ENCODE measurements at regions of chr20 and their contacts with region 1.

Region 1: DNA sequence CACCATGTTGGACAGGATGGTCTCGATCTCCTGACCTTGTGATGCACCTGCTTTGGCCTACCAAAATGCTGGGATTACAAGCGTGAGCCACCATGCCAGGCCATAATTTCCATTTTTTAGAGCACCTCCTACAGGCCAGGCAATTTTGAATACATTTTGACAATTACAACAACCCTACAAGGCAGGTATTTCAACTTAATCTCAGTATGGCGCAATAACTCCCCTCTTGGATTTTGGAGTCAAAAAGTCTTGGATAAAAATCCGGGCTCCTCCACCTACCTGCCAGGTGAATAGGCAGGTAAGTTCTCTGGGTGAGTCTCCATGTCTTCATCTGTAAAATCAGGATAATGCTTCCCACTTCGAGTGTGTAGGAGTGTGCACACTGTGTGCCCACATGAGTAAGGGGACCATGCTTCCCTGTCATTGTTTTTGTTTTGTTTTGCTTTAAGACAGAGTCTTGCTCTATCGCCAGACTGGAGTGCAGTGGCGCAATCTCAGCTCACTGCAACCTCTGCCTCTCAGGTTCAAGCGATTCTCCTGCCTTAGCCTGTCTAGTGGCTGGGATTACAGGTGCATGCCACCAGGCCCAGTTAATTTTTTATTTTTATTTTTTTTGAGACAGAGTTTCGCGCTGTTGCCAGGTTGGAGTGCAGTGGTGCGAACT is 39.3 kb upstream of the TFAP2C start:
- DNase-seq: no peak
- ATAC-seq: no peak
- H3K4me3 ChIP-seq: no peak overlapping the region
- H3K27ac ChIP-seq: no peak overlapping the region
- H3K4me1 ChIP-seq: peaks cover 35% of the 10 kb centered on the region
- H3K27me3 ChIP-seq: no peaks in the 10 kb centered on the region
- CTCF ChIP-seq: 0 out of 2 replicates have a peak, but pooled peaks have one; percentile 19

Region 2: GRCh38 chr20:55360895-55361294 is 1228.9 kb before region 1 on chr20:
- CTCF ChIA-PET with region 1: no interaction called
- POLR2A ChIA-PET with region 1: no interaction called
- intact Hi-C with region 1: no loop called
- DNase-seq: no peak
- ATAC-seq: no peak
- H3K4me3 ChIP-seq: no peak overlapping the region
- H3K27ac ChIP-seq: no peak overlapping the region
- H3K4me1 ChIP-seq: no peaks in the 10 kb centered on the region
- H3K27me3 ChIP-seq: no peaks in the 10 kb centered on the region
- CTCF ChIP-seq: no peak

Region 3: GRCh38 chr20:56380375-56380774 is 209.4 kb before region 1 on chr20:
- CTCF ChIA-PET with region 1: no interaction called
- POLR2A ChIA-PET with region 1: no interaction called
- intact Hi-C with region 1: no loop called
- DNase-seq: no peak
- ATAC-seq: no peak
- H3K4me3 ChIP-seq: no peak overlapping the region
- H3K27ac ChIP-seq: no peak overlapping the region
- H3K4me1 ChIP-seq: no peaks in the 10 kb centered on the region
- H3K27me3 ChIP-seq: no peaks in the 10 kb centered on the region
- CTCF ChIP-seq: no peak

Region 4: DNA sequence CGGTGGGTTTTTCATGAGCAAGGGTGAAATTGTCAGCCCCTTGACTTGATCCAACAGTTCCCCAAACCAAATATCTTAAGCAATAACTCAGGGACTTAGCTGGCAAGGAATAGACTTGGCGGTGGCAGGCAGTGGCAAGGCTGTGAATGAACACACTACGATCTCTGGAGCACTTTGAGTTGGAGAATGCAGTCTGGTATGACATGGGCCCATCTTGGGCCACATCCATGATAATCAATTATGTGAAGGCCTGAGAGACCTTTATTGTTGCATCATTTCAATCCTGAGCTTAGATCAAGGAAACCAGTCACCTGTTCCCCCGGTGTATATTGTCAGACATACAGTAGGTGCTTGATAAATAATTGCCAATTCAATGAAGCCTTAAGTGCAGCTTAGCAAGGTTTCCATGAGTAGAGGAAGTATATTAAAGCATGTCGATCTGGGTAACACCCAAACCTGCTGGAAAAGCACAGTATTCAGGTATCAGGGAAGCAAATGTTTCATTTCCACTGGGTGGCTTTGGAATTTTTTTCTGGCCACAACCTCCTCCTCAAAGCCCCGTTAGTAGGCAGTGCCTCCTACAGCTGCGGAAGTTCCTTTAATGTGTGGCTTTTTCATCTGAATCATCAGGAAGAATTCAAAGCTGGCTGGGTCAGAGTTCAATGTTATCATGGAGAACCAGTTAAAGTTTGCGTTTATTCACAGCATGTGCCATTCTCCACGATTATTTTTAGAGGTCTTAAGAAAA is 167.5 kb before region 1 on chr20:
- CTCF ChIA-PET with region 1: no interaction called
- POLR2A ChIA-PET with region 1: no interaction called
- intact Hi-C with region 1: no loop called
- DNase-seq: peak; percentile 92
- ATAC-seq: peak; percentile 87
- H3K4me3 ChIP-seq: no peak overlapping the region
- H3K27ac ChIP-seq: peak overlapping the region; percentile 6; the same call in 1 of the 2 replicates
- H3K4me1 ChIP-seq: peaks cover 36% of the 10 kb centered on the region
- H3K27me3 ChIP-seq: no peaks in the 10 kb centered on the region
- CTCF ChIP-seq: no peak

Region 5: GRCh38 chr20:56522311-56522710 is 67.5 kb before region 1 on chr20:
- CTCF ChIA-PET with region 1: no interaction called
- POLR2A ChIA-PET with region 1: interaction called, 10 read pairs
- intact Hi-C with region 1: no loop called
- DNase-seq: no peak
- ATAC-seq: no peak
- H3K4me3 ChIP-seq: no peak overlapping the region
- H3K27ac ChIP-seq: no peak overlapping the region
- H3K4me1 ChIP-seq: no peaks in the 10 kb centered on the region
- H3K27me3 ChIP-seq: no peaks in the 10 kb centered on the region
- CTCF ChIP-seq: no peak

Region 6: GRCh38 chr20:56653221-56653620 is 63.5 kb after region 1 on chr20:
- CTCF ChIA-PET with region 1: no interaction called
- POLR2A ChIA-PET with region 1: no interaction called
- intact Hi-C with region 1: no loop called
- DNase-seq: peak; percentile 38
- ATAC-seq: no peak
- H3K4me3 ChIP-seq: no peak overlapping the region
- H3K27ac ChIP-seq: no peak overlapping the region
- H3K4me1 ChIP-seq: no peaks in the 10 kb centered on the region
- H3K27me3 ChIP-seq: no peaks in the 10 kb centered on the region
- CTCF ChIP-seq: no peak